ENCODE measurements at regions of chr1 and their contacts with region 1.

Region 1: DNA sequence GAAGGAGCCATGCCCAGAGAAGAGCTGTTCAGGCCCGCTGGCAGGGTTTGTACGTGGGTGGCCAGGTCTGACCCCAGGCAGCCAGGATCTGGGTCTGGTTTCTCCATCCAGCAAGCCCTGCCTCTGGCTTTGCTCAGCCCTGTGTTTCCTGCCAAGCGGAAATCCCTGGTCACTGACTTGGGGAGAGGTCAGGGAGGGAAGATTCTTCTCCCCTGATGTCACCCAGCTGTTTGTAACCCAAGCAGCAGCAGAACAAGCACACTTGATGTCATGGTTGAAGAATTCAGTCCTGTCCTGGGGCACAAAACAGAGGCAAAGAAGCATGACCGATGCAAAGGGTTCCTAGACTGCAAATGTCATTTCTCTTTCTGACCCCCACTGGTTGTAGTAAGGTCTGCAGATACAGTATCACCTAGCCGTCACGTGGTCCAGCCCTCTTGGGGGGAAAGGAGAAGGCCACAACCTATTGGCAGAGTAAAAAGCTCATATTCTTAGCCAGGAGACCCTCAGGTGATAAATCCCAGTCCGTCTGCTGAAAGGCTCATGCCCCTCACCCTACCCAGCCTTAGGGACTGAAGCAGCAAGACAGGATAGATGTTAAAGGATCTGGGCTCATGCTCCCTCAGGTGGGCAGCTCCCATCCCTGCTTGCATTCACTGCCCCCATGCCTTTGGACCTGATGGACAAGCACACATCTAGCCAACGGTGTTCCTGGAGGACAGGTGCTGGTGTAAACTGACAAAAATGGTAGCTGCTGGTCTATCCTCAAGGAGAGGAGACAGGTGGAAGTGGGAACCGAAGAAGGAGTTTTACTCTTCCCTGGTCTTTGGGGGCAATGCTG is 120.8 kb downstream of the SYT2 start:
- DNase-seq: peak; percentile 93 to 98
- H3K4me3 ChIP-seq: no peak overlapping the region
- H3K27ac ChIP-seq: peak overlapping the region; percentile 93
- H3K4me1 ChIP-seq: peaks cover 60% of the 10 kb centered on the region
- H3K27me3 ChIP-seq: no peaks in the 10 kb centered on the region
- CTCF ChIP-seq: no peak; the same call in 1 of the 2 replicates

Region 2: DNA sequence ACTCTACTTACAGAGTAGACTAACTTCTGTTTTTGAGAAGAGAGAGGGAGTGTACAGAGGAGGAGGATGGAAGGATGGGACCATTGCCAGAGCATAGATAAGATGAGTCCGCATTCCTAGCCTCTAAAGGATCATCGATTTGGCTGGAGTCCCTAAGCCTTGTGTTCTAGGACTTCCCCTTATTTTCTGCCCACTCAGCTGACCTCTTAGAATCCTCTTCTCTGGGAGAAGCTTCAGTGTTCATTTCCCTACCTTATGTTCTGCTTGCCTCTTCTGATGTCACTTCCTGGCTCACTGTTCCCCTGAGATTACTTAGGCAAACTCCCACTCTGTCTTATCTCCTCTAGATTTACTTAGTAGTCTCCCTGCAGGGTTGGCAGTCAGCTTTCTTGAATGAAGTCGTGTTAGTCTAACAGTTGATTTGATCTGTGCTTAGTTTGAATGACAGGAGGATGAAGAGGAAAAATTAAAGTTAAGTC is 35.8 kb before region 1 on chr1:
- CTCF ChIA-PET with region 1: no interaction called
- POLR2A ChIA-PET with region 1: no interaction called
- intact Hi-C with region 1: no loop called
- DNase-seq: no peak
- H3K4me3 ChIP-seq: no peak overlapping the region
- H3K27ac ChIP-seq: no peak overlapping the region
- H3K4me1 ChIP-seq: 0 out of 2 replicates have a peak, but pooled peaks cover 6% of the 10 kb centered on the region
- H3K27me3 ChIP-seq: no peaks in the 10 kb centered on the region
- CTCF ChIP-seq: no peak

Region 3: DNA sequence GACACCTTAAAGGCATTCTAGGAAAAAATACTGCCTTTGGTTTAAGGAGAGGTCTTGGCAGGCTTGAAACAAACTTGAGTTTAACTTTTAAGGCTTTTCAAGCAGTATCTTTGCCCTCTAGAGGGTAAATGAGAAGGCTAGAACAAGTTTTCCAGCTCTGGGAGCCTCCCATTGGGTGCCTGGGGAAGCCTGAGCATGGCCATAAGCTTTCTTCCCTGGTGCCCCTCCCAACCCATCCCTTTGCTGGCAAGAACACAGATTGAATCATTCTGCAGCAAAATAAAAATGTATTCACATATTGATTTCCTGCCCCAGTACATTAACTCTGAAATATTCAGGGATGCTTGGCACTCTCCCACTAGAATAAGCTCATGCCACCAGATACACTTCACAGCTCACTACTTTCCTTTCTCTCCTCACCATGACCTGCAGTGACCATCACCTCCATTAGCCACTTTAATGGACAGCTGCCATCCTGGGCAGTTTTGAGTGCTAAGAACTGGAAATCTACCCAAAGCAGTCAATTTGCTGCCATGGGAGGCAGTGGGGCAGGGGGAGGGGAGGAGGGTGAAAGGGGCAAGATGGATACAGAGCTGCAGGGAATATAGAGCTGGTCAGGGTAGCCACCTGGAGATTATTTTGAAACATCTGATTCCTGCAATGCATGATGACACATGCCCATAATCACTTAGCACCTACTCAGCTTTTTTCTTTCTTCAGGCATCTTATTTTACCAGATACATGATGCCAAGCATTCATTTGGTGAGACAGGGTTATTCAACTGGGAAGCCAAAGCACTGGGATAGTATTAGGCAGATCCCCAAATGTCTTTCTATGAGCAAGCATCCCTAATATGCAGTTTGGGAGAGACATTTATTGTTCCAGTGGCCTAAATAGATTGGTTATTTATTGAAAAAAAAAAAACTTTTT is 19.8 kb before region 1 on chr1:
- CTCF ChIA-PET with region 1: interaction called, 14 read pairs
- POLR2A ChIA-PET with region 1: interaction called, 6 read pairs
- intact Hi-C with region 1: no loop called
- DNase-seq: no peak
- H3K4me3 ChIP-seq: no peak overlapping the region
- H3K27ac ChIP-seq: no peak overlapping the region
- H3K4me1 ChIP-seq: peaks cover 18% of the 10 kb centered on the region
- H3K27me3 ChIP-seq: no peaks in the 10 kb centered on the region
- CTCF ChIP-seq: no peak

Region 4: GRCh38 chr1:202576816-202577215 is 12.6 kb before region 1 on chr1:
- CTCF ChIA-PET with region 1: interaction called, 8 read pairs
- POLR2A ChIA-PET with region 1: interaction called, 10 read pairs
- intact Hi-C with region 1: loop called (anchors 1 kb)
- DNase-seq: peak; percentile 56 to 83
- H3K4me3 ChIP-seq: no peak overlapping the region
- H3K27ac ChIP-seq: peak overlapping the region; percentile 71
- H3K4me1 ChIP-seq: peaks cover 40% of the 10 kb centered on the region
- H3K27me3 ChIP-seq: no peaks in the 10 kb centered on the region
- CTCF ChIP-seq: no peak

Measured in PC-9 (cell line).